ENCODE measurements at regions of chr16 and their contacts with region 1.

Region 1: DNA sequence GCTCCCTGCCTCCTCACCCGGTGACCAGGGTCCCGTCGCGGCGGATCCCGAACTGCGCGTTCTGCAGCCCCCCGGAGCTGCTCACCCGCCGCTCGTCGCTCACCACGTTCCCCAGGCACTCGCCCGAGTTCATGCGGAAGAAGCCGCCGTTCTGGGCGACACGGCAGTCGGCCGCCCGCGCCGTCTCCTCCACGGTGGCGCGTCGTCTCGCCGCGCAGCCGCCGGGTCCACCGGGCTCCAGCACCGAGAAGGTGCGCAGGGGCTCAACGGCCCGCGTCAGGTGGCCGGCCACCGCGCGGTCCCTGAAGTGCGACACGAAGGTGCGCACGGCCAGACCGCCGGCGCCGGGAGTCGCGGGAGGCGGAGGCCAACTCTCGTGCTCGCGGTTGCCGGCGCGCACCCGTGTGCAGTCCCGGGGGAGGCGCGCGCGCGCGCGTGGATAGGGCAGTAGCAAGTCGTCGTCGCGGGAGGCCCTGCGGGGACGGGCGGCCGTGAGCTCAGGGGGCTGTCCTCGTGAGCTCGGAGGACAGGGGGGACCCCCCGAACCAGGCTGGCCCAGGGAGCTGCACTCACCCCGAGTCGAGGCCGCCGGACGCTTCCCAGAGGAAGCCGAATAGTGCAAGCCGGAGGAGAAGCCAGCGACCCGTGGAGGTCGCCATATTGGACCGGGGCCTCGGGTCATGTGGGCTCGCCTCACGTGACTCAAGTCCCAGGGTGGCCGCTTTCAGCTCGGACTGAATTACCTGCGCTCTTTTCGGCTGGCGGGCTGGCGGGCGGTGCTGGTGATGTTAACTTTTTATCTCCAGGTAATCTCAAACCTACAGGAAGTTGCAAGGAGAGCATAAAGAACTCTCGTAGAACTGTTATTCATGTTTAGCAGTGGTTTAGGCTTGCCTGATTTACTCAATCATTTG is at the start of gene NAGPA:
- DNase-seq: peak; percentile 78
- H3K4me3 Mint-ChIP-seq: peak within 1 kb of the TSS; percentile 85
- H3K27ac Mint-ChIP-seq: peak within 1 kb of the TSS; percentile 76
- H3K4me1 Mint-ChIP-seq: peaks cover 15% of the 10 kb centered on the region
- H3K27me3 Mint-ChIP-seq: no peaks in the 10 kb centered on the region
- total RNA-seq, gene NAGPA: 11.6 and 12.5 TPM in 2 replicates

Region 2: GRCh38 chr16:4957720-4958509 is 75.6 kb before region 1 on chr16 and contains the start of gene SEC14L5:
- intact Hi-C with region 1: loop called (anchors 1 kb)
- DNase-seq: peak; percentile 90
- H3K4me3 Mint-ChIP-seq: peak within 1 kb of the TSS; percentile 85
- H3K27ac Mint-ChIP-seq: peak within 1 kb of the TSS; percentile 26
- H3K4me1 Mint-ChIP-seq: peaks cover 22% of the 10 kb centered on the region
- H3K27me3 Mint-ChIP-seq: peaks cover 21% of the 10 kb centered on the region
- total RNA-seq, gene SEC14L5: not detected in 2 replicates

Region 3: GRCh38 chr16:5010576-5011329 is 22.8 kb before region 1 on chr16:
- intact Hi-C with region 1: no loop called
- DNase-seq: no peak
- H3K4me3 Mint-ChIP-seq: no peak overlapping the region
- H3K27ac Mint-ChIP-seq: no peak overlapping the region
- H3K4me1 Mint-ChIP-seq: no peaks in the 10 kb centered on the region
- H3K27me3 Mint-ChIP-seq: no peaks in the 10 kb centered on the region

Region 4: GRCh38 chr16:5071681-5072333 is 38.3 kb after region 1 on chr16 and contains the start of gene ALG1:
- intact Hi-C with region 1: loop called (anchors 1 kb)
- DNase-seq: peak; percentile 88
- H3K4me3 Mint-ChIP-seq: peak within 1 kb of the TSS; percentile 93
- H3K27ac Mint-ChIP-seq: peak within 1 kb of the TSS; percentile 97
- H3K4me1 Mint-ChIP-seq: peaks cover 24% of the 10 kb centered on the region
- H3K27me3 Mint-ChIP-seq: peaks cover 6% of the 10 kb centered on the region
- total RNA-seq, gene ALG1: 40.0 and 41.4 TPM in 2 replicates

Region 5: DNA sequence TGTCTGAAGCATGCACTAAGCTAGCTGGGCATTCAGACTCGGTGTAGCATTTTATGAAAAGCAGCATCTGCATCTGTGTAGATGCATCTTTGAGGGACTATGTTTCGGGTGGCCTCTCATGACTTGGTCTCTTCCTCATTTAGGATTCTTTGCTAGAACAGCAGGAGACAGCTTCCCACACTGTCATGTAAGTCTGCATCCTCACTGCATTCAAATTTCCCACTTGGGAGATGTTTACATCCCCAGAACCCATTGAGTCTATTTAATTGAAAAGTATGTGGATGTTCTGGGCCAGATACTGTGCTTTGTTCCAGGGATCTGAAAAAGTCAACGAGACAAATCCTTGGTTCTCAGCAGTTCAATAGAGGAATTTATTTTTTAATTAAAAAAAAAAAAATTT is 262.7 kb after region 1 on chr16:
- intact Hi-C with region 1: no loop called
- DNase-seq: no peak
- H3K4me3 Mint-ChIP-seq: no peak overlapping the region
- H3K27ac Mint-ChIP-seq: no peak overlapping the region
- H3K4me1 Mint-ChIP-seq: no peaks in the 10 kb centered on the region
- H3K27me3 Mint-ChIP-seq: no peaks in the 10 kb centered on the region